Lower leg skin (tissue), 4 donors: ENCODE measurements at regions of chr3 and their contacts with region 1.

Region 1: GRCh38 chr3:49171119-49171774 is at the start of gene KLHDC8B:
- DNase-seq: peak; percentile 79 to 97
- H3K4me3 ChIP-seq: peak within 1 kb of the TSS; percentile 49
- CTCF ChIP-seq: peak in 1 of 3 donors; percentile 83
- POLR2A ChIP-seq: no peak
- total RNA-seq, gene KLHDC8B: 52.4 to 65.2 (median 56.0) TPM

Region 2: GRCh38 chr3:49445381-49445780 is 274.1 kb after region 1 on chr3:
- intact Hi-C with region 1: loop called (anchors 10 kb)
- DNase-seq: no peak
- H3K4me3 ChIP-seq: no peak overlapping the region
- CTCF ChIP-seq: no peak
- POLR2A ChIP-seq: no peak